Activated CD4-positive, alpha-beta T cell treated with anti-CD3 and anti-CD28 coated beads for 36 hours (primary cell): ENCODE measurements at regions of chr1 and their contacts with region 1.

Region 1: DNA sequence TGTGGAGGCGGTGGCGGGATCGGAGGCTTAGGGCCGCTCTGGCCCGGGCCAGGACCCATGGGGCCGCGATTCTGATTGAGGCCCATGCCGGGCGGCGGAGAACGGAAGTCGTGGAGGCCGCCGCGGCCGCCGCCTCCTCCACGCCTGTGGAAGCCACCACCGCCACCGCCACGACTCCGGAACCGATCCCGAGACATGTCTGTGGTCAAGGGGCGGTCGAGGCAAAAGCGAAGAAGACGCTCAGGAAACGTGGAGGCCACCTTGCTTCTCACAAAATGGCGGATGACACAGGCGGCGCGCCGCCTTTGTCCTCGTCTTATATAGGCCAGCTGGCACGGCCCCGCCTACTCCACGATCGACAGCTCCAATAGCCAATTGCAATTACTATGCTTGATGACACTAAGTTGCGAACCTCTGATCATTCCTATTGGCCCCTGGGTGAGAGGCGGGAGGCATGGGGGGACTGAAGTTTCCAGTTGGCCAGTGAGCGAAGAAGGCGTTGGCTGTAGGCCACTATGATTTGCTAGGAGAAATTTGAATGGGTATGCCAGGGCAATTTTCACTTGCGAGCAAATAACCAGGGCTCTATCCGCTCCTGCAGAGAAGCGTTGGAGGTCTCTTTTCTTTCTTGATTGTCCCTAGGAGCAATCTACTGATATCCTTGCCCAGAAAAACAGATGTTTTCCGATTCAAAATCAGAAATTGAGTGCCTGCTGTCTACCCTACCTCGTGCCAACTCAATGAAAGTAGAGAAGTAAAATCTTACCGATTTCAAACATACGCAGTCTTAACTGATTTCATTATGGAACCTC is at the start of gene SFPQ:
- DNase-seq: peak; percentile 96
- ATAC-seq: peak; percentile 96
- H3K4me3 Mint-ChIP-seq: peak within 1 kb of the TSS; percentile 90
- H3K27ac Mint-ChIP-seq: peak within 1 kb of the TSS; percentile 98
- H3K4me1 Mint-ChIP-seq: peaks cover 32% of the 10 kb centered on the region
- H3K27me3 Mint-ChIP-seq: no peaks in the 10 kb centered on the region
- total RNA-seq, gene SFPQ: 350 to 389 TPM

Region 2: GRCh38 chr1:35030756-35031446 is 162.2 kb before region 1 on chr1:
- CTCF ChIA-PET with region 1: interaction called, 3 read pairs
- POLR2A ChIA-PET with region 1: no interaction called
- intact Hi-C with region 1: loop called (anchors 1 to 2 kb)
- DNase-seq: peak; percentile 63
- ATAC-seq: peak; percentile 70
- H3K4me3 Mint-ChIP-seq: peak overlapping the region; percentile 92
- H3K27ac Mint-ChIP-seq: peak overlapping the region; percentile 92
- H3K4me1 Mint-ChIP-seq: peaks cover 33% of the 10 kb centered on the region
- H3K27me3 Mint-ChIP-seq: no peaks in the 10 kb centered on the region

Region 3: DNA sequence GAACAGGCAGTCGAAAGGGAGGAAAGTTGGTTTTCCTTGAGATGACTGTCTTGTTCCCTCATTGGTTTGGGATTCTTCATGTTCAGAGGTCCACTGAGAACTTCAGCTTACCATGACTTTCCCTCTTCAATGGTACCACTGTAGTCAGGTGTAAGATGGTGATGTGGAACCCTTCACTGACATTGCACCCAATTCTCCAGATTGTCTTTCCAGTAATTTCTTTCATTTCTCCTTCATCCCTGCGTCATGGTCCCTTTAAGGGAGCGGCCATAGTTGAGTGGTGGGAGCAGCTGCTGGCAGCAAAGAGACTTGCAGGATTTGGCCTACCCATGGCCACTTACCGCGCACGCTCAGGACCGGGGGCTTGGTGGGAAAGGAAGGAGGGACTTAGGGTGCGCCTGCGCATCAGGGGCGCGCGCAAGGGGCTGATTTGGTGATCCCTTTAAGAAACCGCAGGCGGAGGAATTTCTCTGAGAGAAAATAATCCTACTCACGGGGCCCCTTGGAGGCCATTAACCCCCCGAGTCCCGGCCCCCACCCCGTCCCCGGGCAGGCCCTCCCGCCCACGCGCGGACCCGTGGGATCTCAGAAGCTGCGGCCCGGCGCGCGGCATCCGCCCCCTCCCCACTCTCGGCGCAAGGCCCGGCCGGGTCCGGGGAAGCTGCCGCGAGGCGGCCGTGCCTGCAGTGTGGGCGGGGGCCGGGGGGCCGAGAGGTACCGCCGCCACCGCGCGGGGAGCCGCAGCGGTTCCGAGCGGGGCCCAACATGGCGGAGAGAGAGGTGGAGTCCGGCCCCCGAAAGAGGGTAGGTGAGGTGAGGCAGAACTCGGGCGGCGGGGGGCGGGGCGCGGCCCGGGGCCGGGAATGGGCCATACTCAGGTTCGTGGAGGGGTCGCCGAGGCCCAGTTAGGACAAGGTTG is 75.5 kb after region 1 on chr1 and contains the start of gene ZMYM4:
- CTCF ChIA-PET with region 1: no interaction called
- POLR2A ChIA-PET with region 1: no interaction called
- intact Hi-C with region 1: loop called (anchors 1 to 2 kb)
- DNase-seq: peak; percentile 94
- ATAC-seq: peak; percentile 98
- H3K4me3 Mint-ChIP-seq: peak within 1 kb of the TSS; percentile 76
- H3K27ac Mint-ChIP-seq: peak within 1 kb of the TSS; percentile 83
- H3K4me1 Mint-ChIP-seq: peaks cover 30% of the 10 kb centered on the region
- H3K27me3 Mint-ChIP-seq: no peaks in the 10 kb centered on the region
- total RNA-seq, gene ZMYM4: 27.8 to 31.6 TPM

Region 4: GRCh38 chr1:35715568-35716002 is 522.5 kb after region 1 on chr1:
- CTCF ChIA-PET with region 1: no interaction called
- POLR2A ChIA-PET with region 1: no interaction called
- intact Hi-C with region 1: loop called in 1 of 2 experiments (anchors 2 kb)
- DNase-seq: peak; percentile 90
- ATAC-seq: peak; percentile 61
- H3K4me3 Mint-ChIP-seq: peak overlapping the region; percentile 37
- H3K27ac Mint-ChIP-seq: no peak overlapping the region
- H3K4me1 Mint-ChIP-seq: peaks cover 31% of the 10 kb centered on the region
- H3K27me3 Mint-ChIP-seq: no peaks in the 10 kb centered on the region

Region 5: GRCh38 chr1:36155408-36156328 is 962.6 kb after region 1 on chr1 and contains the start of gene MAP7D1:
- CTCF ChIA-PET with region 1: no interaction called
- POLR2A ChIA-PET with region 1: no interaction called
- intact Hi-C with region 1: loop called in 1 of 2 experiments (anchors 5 kb)
- DNase-seq: peak; percentile 92
- ATAC-seq: peak; percentile 57
- H3K4me3 Mint-ChIP-seq: peak within 1 kb of the TSS; percentile 88
- H3K27ac Mint-ChIP-seq: peak within 1 kb of the TSS; percentile 90
- H3K4me1 Mint-ChIP-seq: peaks cover 68% of the 10 kb centered on the region
- H3K27me3 Mint-ChIP-seq: no peaks in the 10 kb centered on the region
- total RNA-seq, gene MAP7D1: 122 to 133 TPM